ENCODE measurements at regions of chr7 and their contacts with region 1.

Region 1: GRCh38 chr7:76185187-76185896 is 16.4 kb upstream of the SRRM3 start:
- DNase-seq: no peak
- H3K4me3 ChIP-seq: no peak overlapping the region
- H3K27ac ChIP-seq: no peak overlapping the region
- H3K4me1 ChIP-seq: no peaks in the 10 kb centered on the region
- H3K27me3 ChIP-seq: no peaks in the 10 kb centered on the region
- CTCF ChIP-seq: no peak
- POLR2A ChIP-seq: no peak

Region 2: GRCh38 chr7:76282344-76283253 is 97.3 kb after region 1 on chr7:
- intact Hi-C with region 1: loop called (anchors 10 kb)
- DNase-seq: no peak
- H3K4me3 ChIP-seq: peak overlapping the region; percentile 52 to 58
- H3K27ac ChIP-seq: peak overlapping the region; percentile 76
- H3K4me1 ChIP-seq: peaks cover 18% of the 10 kb centered on the region
- H3K27me3 ChIP-seq: no peaks in the 10 kb centered on the region
- CTCF ChIP-seq: no peak
- POLR2A ChIP-seq: peak in 1 of 2 donors; percentile 36

Measured in vagina (tissue), 2 donors.